ENCODE measurements at regions of chr5 and their contacts with region 1.

Region 1: DNA sequence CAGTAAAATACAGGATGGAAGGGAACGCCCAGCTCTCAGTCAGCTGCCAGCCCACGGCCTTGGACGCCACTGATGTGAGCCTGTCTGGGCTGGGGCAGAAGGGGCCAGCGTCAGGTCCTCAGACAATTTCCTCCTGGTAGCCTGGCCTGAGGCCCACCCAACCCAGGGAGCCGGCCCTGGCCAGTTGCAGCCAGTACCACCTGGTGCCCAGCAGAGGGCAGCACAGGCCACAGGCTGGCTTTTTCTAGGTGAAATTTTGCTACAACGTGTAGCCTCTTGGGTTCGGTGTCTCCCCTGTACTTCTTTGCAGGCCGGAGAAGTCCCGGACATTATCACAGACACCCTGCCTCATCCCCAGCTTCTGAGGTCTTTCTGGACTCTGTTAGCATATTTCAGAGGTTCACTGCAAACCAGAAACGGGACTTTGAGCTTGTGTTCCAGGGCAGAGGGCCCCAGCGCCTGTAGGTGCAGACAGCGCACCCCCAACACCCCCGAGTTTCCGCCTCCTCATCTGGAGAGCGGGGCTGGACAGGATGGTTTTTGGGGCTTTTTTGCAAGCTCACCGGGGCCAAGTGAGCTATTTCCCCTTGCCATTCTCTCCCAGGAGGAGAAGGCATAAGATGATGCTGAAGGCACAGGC is 45.9 kb upstream of the KCNMB1 start:
- DNase-seq: peak; percentile 88
- H3K4me3 ChIP-seq: no peak overlapping the region
- H3K27ac ChIP-seq: peak overlapping the region in 2 of 8 donors; percentile 5 to 45
- H3K4me1 ChIP-seq: peaks cover 0 to 15% (median 5%) of the 10 kb centered on the region in 6 donors
- H3K27me3 ChIP-seq: peaks cover 0 to 22% (median 0%) of the 10 kb centered on the region in 7 donors
- CTCF ChIP-seq: peak; percentile 70 to 97 (median 93)
- POLR2A ChIP-seq: no peak

Region 2: GRCh38 chr5:170633235-170634081 is 198.4 kb after region 1 on chr5:
- intact Hi-C with region 1: loop called (anchors 5 kb)
- DNase-seq: peak; percentile 50
- H3K4me3 ChIP-seq: peak overlapping the region in 2 of 8 donors; percentile 22 to 51
- H3K27ac ChIP-seq: peak overlapping the region; percentile 27 to 80 (median 74)
- H3K4me1 ChIP-seq: peaks cover 5 to 40% (median 25%) of the 10 kb centered on the region in 6 donors
- H3K27me3 ChIP-seq: peaks cover 0 to 21% (median 0%) of the 10 kb centered on the region in 7 donors
- CTCF ChIP-seq: peak in 7 of 11 experiments; percentile 1 to 94 (median 36)
- POLR2A ChIP-seq: no peak

Region 3: GRCh38 chr5:170986598-170986997 is 551.5 kb after region 1 on chr5:
- intact Hi-C with region 1: no loop called
- DNase-seq: no peak
- H3K4me3 ChIP-seq: no peak overlapping the region
- H3K27ac ChIP-seq: no peak overlapping the region
- H3K4me1 ChIP-seq: no peaks in the 10 kb centered on the region
- H3K27me3 ChIP-seq: no peaks in the 10 kb centered on the region
- CTCF ChIP-seq: no peak
- POLR2A ChIP-seq: no peak